Activated CD4-positive, alpha-beta T cell treated with anti-CD3 and anti-CD28 coated beads, Interleukin-2, amount 10 ng/mL, durations not matched to agents 24 days and 14 days (primary cell): ENCODE measurements at regions of chr16 and their contacts with region 1.

Region 1: DNA sequence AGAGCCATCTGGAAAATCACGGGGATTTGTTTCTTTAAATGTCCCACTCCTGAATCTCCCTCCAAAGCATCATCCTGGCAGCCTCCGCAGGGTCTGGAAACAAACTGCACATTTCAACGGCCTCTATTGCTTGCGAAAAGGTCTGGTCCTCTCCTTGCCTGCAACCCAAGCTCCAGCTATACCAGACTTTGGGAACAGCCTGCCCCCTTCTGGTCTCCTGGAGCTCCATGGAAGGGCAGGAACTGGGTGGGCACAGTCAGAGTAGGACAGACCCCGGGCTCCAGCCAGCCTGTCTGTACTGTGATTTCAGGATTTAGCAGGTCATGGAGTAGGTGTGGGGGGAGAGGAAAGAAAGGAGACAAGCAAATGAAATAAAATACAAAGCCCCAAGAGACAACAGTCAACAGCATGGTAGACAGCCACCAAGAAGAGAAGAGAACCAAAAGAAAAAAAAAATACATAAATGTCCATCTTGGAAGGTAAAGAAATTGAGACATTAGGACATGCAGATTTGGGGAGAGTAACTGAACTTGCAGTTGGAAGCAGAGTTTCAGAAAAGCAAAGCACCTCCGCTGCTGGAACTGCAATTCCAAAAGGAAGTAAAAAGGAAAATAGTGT is 2.7 kb downstream of the XYLT1 start:
- DNase-seq: peak; percentile 84
- H3K4me3 Mint-ChIP-seq: peak overlapping the region; percentile 89
- H3K27ac Mint-ChIP-seq: no peak overlapping the region
- H3K4me1 Mint-ChIP-seq: peaks cover 53% of the 10 kb centered on the region
- H3K27me3 Mint-ChIP-seq: no peaks in the 10 kb centered on the region

Region 2: DNA sequence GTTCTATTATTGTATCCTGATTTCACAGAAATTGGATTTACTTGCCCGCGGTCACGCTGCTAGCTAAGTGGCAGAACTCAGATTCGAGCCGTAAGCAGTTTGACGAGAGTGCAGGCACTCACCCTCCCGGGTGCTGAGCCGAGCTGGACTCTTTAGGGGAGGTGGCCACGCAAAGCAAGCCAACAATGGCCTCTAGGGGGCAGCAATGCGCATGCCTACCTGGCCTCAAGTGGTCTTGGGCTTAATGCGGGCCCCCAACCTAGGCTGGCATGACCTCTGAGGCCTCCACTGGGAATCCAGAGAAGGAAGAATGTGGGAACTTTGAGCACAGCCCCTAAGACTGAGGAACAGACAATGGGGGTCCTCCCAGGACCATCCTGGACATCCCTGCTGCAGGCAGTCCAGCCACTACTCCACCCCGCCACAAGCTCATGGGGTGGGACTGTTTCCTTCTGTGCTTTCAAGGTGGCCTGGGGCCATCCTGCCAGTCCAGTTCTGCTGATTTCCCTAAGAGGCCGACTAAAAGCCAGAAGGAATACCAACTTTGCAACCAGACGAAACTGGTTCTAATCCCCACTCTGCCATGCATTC is 273.7 kb before region 1 on chr16:
- intact Hi-C with region 1: loop called (anchors 5 kb)
- DNase-seq: peak; percentile 86
- H3K4me3 Mint-ChIP-seq: no peak overlapping the region
- H3K27ac Mint-ChIP-seq: no peak overlapping the region
- H3K4me1 Mint-ChIP-seq: peaks cover 3% of the 10 kb centered on the region
- H3K27me3 Mint-ChIP-seq: no peaks in the 10 kb centered on the region

Region 3: GRCh38 chr16:17211797-17212196 is 256.2 kb before region 1 on chr16:
- intact Hi-C with region 1: loop called (anchors 10 kb)
- DNase-seq: peak; percentile 78
- H3K4me3 Mint-ChIP-seq: no peak overlapping the region
- H3K27ac Mint-ChIP-seq: no peak overlapping the region
- H3K4me1 Mint-ChIP-seq: peaks cover 25% of the 10 kb centered on the region
- H3K27me3 Mint-ChIP-seq: no peaks in the 10 kb centered on the region

Region 4: GRCh38 chr16:17273142-17273561 is 194.9 kb before region 1 on chr16:
- intact Hi-C with region 1: loop called (anchors 1 kb)
- DNase-seq: peak; percentile 74
- H3K4me3 Mint-ChIP-seq: peak overlapping the region; percentile 68
- H3K27ac Mint-ChIP-seq: peak overlapping the region; percentile 71
- H3K4me1 Mint-ChIP-seq: peaks cover 44% of the 10 kb centered on the region
- H3K27me3 Mint-ChIP-seq: peaks cover 5% of the 10 kb centered on the region

Region 5: GRCh38 chr16:17369421-17370222 is 98.4 kb before region 1 on chr16:
- intact Hi-C with region 1: loop called (anchors 2 kb)
- DNase-seq: peak; percentile 93
- H3K4me3 Mint-ChIP-seq: peak overlapping the region; percentile 86
- H3K27ac Mint-ChIP-seq: peak overlapping the region; percentile 96
- H3K4me1 Mint-ChIP-seq: peaks cover 84% of the 10 kb centered on the region
- H3K27me3 Mint-ChIP-seq: no peaks in the 10 kb centered on the region

Region 6: DNA sequence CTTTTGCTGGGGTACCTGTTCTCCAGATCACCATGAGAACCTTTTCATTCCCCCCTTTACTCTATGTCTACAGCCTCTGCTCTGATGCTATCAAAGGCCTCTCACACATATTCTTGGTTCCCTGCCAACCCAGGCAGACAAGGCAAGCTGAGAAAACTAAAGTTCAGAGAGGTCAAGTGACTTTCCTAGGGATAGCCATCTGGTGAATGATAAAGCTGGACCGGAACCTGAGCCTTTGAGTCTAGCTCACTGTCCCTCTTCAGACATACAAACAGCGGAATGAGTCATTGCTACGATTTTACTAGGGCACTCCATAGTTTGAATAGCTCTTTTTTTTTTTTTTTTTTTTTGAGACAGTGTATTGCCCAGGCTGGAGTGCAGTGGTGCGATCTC is 70.5 kb before region 1 on chr16:
- intact Hi-C with region 1: no loop called
- DNase-seq: no peak
- H3K4me3 Mint-ChIP-seq: no peak overlapping the region
- H3K27ac Mint-ChIP-seq: no peak overlapping the region
- H3K4me1 Mint-ChIP-seq: peaks cover 23% of the 10 kb centered on the region
- H3K27me3 Mint-ChIP-seq: no peaks in the 10 kb centered on the region

Region 7: DNA sequence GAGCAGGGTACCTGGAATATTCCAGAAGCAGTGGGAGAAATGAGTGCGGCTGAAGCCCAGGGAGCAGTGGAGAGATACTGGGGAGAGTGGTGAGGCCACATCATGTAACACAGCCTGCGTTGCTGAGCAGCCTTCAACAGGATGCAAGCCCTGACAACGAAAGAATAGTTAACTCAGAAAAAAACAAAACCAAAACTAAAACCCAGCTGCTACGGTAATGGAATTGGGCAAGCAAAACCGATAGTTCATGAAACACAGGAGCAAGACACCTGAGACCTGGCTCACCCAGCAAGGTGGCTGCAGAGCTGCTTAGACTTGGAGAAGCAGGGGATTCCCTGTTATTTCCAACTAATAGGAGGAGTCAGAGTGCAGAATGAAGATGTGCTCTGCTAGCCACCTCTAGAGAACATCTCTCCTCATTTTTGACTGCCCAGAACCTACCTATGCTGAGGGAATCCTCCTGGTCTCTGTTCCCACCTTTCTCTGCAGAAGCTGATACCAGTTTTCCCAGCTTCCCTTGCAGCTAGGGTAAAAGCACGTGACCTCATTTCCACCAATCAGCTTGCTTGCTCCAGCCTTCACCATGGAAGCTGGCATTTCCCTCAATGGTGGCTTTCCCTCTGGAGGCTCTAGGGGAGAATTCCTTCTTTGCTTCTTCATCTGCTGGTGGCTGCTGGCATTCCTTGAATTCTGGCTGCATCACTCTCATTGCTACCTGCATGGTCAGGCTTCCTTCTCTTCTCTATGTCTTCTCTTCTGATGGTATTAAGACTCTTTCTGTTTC is 62.1 kb after region 1 on chr16:
- intact Hi-C with region 1: no loop called
- DNase-seq: peak; percentile 84
- H3K4me3 Mint-ChIP-seq: peak overlapping the region; percentile 71
- H3K27ac Mint-ChIP-seq: peak overlapping the region; percentile 67
- H3K4me1 Mint-ChIP-seq: peaks cover 16% of the 10 kb centered on the region
- H3K27me3 Mint-ChIP-seq: peaks cover under 1% of the 10 kb centered on the region

Region 8: GRCh38 chr16:17768257-17768656 is 300.2 kb after region 1 on chr16:
- intact Hi-C with region 1: no loop called
- DNase-seq: no peak
- H3K4me3 Mint-ChIP-seq: no peak overlapping the region
- H3K27ac Mint-ChIP-seq: no peak overlapping the region
- H3K4me1 Mint-ChIP-seq: no peaks in the 10 kb centered on the region
- H3K27me3 Mint-ChIP-seq: peaks cover 4% of the 10 kb centered on the region